ENCODE measurements at regions of chr16 and their contacts with region 1.

Region 1: DNA sequence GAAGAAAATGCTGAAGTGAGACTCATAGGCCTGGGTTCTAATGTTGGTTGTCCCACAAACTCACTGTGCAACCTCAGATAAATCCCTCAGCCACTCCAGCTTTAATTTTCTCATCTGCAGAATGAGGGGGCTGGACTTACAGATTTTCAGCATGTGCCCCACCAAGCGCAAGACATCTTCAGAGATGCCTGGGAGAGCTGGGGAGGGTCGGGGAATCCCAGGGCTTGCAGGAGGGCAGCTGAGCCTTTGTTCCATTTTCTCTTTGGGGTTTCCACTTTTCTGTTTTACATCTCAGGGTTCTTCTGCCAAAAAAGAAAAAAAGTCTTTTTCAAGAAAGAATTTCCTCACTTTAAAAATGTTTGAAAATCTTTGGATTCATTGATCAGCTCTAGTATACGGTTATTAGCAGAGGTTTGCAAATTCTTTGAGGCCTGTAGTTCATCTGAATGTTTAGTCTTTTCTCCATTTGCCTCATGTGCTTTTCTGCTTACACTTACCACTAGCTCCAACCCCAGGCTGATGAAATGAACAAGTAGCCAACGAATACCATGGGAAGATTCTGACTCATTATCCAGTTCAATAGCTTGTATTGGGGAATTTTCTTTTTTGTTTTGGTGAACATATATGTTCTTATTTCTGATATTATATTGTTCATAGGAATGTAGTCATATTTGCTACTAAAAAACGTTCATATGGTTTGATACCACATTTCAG is 56.4 kb downstream of the CHD9 start:
- DNase-seq: no peak
- H3K4me3 ChIP-seq: no peak overlapping the region
- H3K27ac ChIP-seq: no peak overlapping the region
- H3K4me1 ChIP-seq: peaks cover 0 to 4% of the 10 kb centered on the region in 2 donors
- H3K27me3 ChIP-seq: no peaks in the 10 kb centered on the region
- CTCF ChIP-seq: no peak
- POLR2A ChIP-seq: no peak

Region 2: DNA sequence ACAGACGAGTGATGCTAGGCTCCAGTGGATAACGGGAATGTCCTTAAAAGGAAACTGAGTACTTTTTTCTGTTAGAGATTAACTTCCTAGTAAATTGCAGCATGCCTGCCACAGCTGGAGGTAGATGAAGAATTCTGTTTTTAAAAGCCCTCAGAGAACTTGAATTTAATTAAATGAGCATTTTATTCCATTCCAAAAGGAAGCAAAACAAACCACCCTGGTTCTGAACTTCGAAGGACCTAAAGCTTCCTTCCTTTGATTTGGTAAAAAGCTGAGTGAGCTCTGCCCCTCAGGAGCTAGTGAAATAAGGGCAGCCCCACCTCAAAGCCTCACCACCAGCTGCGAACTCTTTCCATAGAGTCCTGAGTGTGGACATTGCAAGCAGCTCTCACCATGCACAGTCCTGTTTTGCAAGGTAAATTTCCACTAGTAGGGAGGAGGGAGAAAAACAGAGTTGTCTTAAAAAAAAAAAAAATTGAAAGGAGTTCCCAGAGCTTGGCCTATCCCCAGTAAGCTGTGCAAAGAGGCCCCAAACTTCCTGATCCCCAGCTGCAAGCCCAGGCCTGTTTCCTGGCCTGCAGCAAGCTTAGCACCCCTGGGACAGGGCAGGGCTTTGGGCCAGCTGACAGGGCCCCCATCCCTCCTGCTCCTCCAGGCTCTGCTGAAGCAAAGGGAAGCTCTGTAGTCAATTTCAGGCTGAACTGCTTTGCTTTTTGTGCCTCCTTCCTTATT is 69.7 kb before region 1 on chr16:
- intact Hi-C with region 1: no loop called
- DNase-seq: peak; percentile 57 to 66
- H3K4me3 ChIP-seq: peak overlapping the region in 2 of 3 donors; percentile 46 to 50
- H3K27ac ChIP-seq: peak overlapping the region; percentile 79 to 89
- H3K4me1 ChIP-seq: peaks cover 6 to 12% of the 10 kb centered on the region in 2 donors
- H3K27me3 ChIP-seq: no peaks in the 10 kb centered on the region
- CTCF ChIP-seq: no peak
- POLR2A ChIP-seq: no peak

Region 3: DNA sequence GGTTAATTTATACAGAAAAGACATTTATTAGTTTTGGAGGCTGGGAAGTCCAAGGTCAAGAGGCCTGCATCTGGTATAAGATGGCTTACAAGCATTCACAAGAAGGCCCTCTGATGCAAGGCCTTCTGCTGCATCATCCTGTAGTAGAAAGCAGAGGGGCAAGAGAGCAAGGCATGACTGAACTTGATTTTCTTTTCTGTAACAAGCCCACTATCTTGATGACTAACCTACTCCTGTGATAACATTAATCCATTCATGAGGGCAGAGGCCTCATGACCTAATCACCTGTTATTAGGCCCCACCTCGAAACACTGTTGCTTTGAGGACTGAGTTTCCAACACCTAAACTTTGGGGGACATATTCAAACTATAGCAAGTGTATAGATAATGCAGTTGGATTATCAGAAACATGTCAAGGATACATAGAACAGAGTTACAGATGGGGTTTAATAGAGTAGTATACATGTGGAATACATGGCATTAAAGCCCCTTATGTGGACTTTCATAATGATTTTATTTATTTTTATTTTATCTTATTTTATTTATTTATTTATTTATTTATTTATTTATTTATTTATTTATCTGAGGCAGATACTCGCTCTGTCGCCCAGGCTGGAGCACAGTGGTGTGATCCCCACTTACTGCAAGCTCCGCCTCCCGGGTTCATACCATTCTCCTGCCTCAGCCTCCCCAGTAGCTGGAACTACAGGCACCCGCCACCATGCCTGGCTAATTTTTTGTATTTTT is 31.8 kb after region 1 on chr16:
- intact Hi-C with region 1: loop called (anchors 2 kb)
- DNase-seq: no peak
- H3K4me3 ChIP-seq: no peak overlapping the region
- H3K27ac ChIP-seq: no peak overlapping the region
- H3K4me1 ChIP-seq: no peaks in the 10 kb centered on the region
- H3K27me3 ChIP-seq: no peaks in the 10 kb centered on the region
- CTCF ChIP-seq: no peak
- POLR2A ChIP-seq: no peak

Measured in breast epithelium (tissue), 4 donors.